HepG2 (cell line): ENCODE measurements at regions of chr1 and their contacts with region 1.

Region 1: GRCh38 chr1:203861379-203862184 is at the start of gene SNRPE:
- DNase-seq: peak; percentile 96
- ATAC-seq: peak; percentile 96
- H3K4me3 ChIP-seq: peak within 1 kb of the TSS; percentile 87 to 90 (median 90)
- H3K27ac ChIP-seq: peak within 1 kb of the TSS; percentile 85
- H3K4me1 ChIP-seq: peaks cover 27% of the 10 kb centered on the region
- H3K27me3 ChIP-seq: no peaks in the 10 kb centered on the region; a peak in 1 of 5 replicates
- CTCF ChIP-seq: peak; percentile 97
- EP300 ChIP-seq: peak in 1 of 2 experiments; percentile 48; a peak in 1 of 4 replicates
- POLR2A ChIP-seq: peak; percentile 71 to 92
- RAD21 ChIP-seq: peak; percentile 96
- total RNA-seq, gene SNRPE: 281 and 397 TPM in 2 replicates

Region 2: DNA sequence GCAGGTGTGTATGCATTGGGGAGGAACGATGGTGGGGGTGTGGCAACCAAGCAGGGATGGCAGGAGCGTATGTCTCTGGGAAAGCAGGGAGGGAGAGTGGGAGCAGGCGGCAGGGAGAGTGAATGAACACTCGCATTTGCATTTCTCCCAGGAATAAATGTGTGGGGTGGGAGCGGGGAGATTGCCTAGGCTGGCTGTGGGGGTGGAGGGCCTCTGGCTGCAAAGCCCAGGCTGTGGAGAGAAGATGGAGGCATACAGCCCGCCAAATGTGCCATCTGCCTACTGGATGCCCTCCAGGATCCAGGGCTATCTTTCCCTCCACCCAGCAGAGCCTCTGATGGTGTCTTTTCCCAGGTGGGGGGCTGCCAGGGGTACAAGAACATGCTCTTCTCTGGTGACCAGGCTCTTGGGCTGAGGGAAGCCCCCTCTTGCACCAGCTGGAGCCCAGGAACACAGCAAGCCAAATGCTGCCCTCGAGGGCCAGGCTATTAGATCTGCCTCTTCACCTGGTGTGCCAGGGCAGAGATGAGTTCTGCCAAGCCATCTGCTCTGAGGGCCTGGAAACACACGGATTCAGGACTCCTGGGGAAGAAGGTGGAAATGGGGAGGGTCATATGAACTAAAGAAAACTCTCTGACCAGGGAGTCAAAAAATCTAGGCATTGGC is 369.4 kb before region 1 on chr1:
- CTCF ChIA-PET with region 1: no interaction called
- POLR2A ChIA-PET with region 1: no interaction called
- in situ Hi-C with region 1: no loop called
- intact Hi-C with region 1: no loop called
- DNase-seq: no peak
- ATAC-seq: no peak
- H3K4me3 ChIP-seq: no peak overlapping the region
- H3K27ac ChIP-seq: no peak overlapping the region
- H3K4me1 ChIP-seq: no peaks in the 10 kb centered on the region
- H3K27me3 ChIP-seq: peaks cover 2 to 39% of the 10 kb centered on the region in 2 experiments; a peak in 3 of 5 replicates
- CTCF ChIP-seq: no peak
- EP300 ChIP-seq: no peak
- POLR2A ChIP-seq: no peak
- RAD21 ChIP-seq: no peak

Region 3: GRCh38 chr1:203911806-203912205 is 50.2 kb after region 1 on chr1:
- CTCF ChIA-PET with region 1: no interaction called
- POLR2A ChIA-PET with region 1: no interaction called
- in situ Hi-C with region 1: no loop called
- intact Hi-C with region 1: no loop called
- DNase-seq: no peak
- ATAC-seq: no peak
- H3K4me3 ChIP-seq: no peak overlapping the region
- H3K27ac ChIP-seq: no peak overlapping the region
- H3K4me1 ChIP-seq: peaks cover 12% of the 10 kb centered on the region
- H3K27me3 ChIP-seq: no peaks in the 10 kb centered on the region
- CTCF ChIP-seq: no peak
- EP300 ChIP-seq: no peak
- POLR2A ChIP-seq: no peak
- RAD21 ChIP-seq: no peak

Region 4: DNA sequence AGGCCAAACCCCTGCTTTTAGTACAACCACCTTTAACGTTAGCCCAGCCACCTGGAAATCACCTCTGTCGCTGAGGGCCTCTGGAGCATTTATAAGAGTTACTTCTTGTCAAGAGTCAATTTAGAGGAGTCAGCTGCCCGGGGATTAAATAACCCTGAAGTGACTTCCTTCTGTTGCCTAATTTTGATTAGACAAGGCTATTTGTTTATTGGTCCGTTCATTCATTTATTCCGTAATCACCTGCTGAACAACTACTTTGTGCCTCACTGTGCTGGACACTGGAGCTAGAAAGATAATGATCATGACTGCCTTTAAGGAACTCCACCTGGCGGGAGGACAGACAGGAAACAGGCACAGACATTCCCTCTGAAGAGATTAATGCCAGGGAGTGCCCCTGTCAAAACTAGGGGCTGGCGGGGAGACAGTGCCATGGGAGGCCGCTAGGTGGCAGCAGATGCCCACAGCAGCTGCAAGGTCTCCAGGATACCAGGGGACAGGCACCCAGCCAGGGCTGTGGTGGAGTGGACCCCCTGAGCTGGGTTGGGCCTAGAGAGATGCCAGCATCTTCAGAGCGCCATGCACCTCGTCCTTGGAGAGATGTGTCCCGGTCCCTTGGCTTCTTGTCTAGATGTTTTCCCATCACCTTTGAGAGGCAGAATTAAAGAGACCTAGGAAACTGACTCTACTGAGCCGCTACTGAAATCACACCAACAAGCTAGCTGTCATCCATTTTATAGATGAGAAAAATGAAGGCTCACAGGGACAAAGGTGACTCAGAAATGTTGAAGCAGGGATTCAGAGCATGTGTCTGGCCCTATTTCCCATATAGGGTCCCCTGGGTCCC is 300.9 kb after region 1 on chr1:
- CTCF ChIA-PET with region 1: interaction called, 10 read pairs
- POLR2A ChIA-PET with region 1: no interaction called
- in situ Hi-C with region 1: no loop called
- intact Hi-C with region 1: no loop called
- DNase-seq: peak; percentile 60
- ATAC-seq: peak; percentile 92
- H3K4me3 ChIP-seq: no peak overlapping the region
- H3K27ac ChIP-seq: no peak overlapping the region
- H3K4me1 ChIP-seq: peaks cover 36% of the 10 kb centered on the region
- H3K27me3 ChIP-seq: peaks cover 5 to 30% of the 10 kb centered on the region in 2 experiments; a peak in 3 of 5 replicates
- CTCF ChIP-seq: peak; percentile 97
- EP300 ChIP-seq: no peak
- POLR2A ChIP-seq: no peak
- RAD21 ChIP-seq: peak; percentile 96

Region 5: DNA sequence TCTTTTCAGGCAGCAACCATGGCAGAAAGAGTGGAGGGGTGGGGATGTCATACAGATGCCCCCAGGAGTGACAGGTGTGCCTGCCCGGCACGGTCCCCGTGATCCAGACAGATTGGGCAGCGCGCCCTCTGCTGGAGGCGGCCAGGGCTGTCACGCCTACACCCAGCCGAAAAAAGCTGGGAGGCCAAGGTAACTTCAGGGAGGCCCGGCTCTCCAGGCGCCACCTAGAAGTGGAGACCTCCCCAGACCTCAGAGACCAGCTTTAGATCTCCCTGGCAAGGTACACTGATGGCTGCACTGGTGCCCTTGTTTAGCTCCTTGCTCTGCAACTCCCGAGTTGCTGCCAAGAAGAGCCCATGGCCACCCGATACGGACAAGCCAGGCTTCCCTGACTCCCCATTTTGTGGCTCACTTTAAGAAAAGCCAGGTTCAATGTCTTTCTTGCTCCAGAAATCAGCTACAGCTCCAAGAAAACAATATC is 345.6 kb after region 1 on chr1:
- CTCF ChIA-PET with region 1: interaction called, 3 read pairs
- POLR2A ChIA-PET with region 1: no interaction called
- in situ Hi-C with region 1: loop called (anchors 10 kb)
- intact Hi-C with region 1: loop called (anchors 5 kb)
- DNase-seq: peak; percentile 19
- ATAC-seq: peak; percentile 98
- H3K4me3 ChIP-seq: no peak overlapping the region
- H3K27ac ChIP-seq: no peak overlapping the region
- H3K4me1 ChIP-seq: peaks cover 30% of the 10 kb centered on the region
- H3K27me3 ChIP-seq: no peaks in the 10 kb centered on the region
- CTCF ChIP-seq: peak; percentile 95
- EP300 ChIP-seq: no peak
- POLR2A ChIP-seq: no peak
- RAD21 ChIP-seq: peak; percentile 81